AG04450 (cell line): ENCODE measurements at regions of chr11 and their contacts with region 1.

Region 1: GRCh38 chr11:86483940-86484794 is 109.5 kb downstream of the CCDC81 start:
- DNase-seq: peak; percentile 96
- H3K4me3 ChIP-seq: no peak overlapping the region
- H3K27ac ChIP-seq: peak overlapping the region; percentile 58
- H3K27me3 ChIP-seq: no peaks in the 10 kb centered on the region
- CTCF ChIP-seq: no peak

Region 2: GRCh38 chr11:86408845-86409244 is 75.3 kb before region 1 on chr11:
- CTCF ChIA-PET with region 1: no interaction called
- POLR2A ChIA-PET with region 1: no interaction called
- DNase-seq: no peak
- H3K4me3 ChIP-seq: no peak overlapping the region
- H3K27ac ChIP-seq: no peak overlapping the region
- H3K27me3 ChIP-seq: no peaks in the 10 kb centered on the region
- CTCF ChIP-seq: peak; percentile 63

Region 3: DNA sequence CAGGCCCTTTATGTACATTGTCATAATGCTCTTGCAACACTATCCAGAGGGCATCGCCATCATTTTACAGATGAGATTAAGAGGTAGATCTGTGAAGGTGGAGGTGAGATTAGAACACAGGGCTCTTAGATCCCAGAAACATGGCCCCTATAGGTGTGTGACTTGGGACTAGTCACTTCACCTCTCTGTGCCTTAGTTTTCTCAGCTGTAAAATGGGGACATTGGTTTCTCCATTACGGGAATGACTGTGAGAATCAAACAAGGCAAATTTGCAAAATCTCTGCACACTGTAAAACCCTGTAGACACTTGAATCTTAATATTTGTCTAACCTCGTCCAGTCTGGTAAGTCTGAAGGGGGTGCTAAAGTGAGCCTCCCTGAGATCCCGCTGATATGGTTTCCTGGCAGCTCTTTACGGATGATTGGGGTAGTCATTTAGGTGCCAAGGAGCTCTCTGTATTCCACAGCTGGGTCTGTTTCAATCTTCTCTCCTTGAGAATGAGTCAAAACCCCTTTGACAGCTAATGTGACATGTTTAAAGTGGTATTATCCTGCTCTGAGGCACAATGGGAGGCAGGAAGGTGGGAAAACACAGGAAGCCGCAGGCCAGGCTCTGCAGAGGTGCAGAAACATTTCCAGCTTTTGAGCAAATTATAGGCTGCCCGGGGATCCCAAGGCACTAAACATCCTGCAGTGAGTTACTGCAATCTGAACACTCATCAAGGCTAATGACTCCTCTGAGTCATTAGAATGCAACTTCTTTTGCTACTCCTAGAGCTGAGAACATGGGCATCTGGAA is 31.3 kb after region 1 on chr11:
- CTCF ChIA-PET with region 1: no interaction called
- POLR2A ChIA-PET with region 1: interaction called, 12 read pairs
- DNase-seq: peak; percentile 55
- H3K4me3 ChIP-seq: no peak overlapping the region
- H3K27ac ChIP-seq: peak overlapping the region; percentile 31
- H3K27me3 ChIP-seq: no peaks in the 10 kb centered on the region
- CTCF ChIP-seq: no peak

Region 4: GRCh38 chr11:86523738-86524619 is 39.8 kb after region 1 on chr11:
- CTCF ChIA-PET with region 1: no interaction called
- POLR2A ChIA-PET with region 1: interaction called, 14 read pairs
- DNase-seq: peak; percentile 92
- H3K4me3 ChIP-seq: no peak overlapping the region
- H3K27ac ChIP-seq: no peak overlapping the region
- H3K27me3 ChIP-seq: no peaks in the 10 kb centered on the region
- CTCF ChIP-seq: no peak